ENCODE measurements at regions of chr4 and their contacts with region 1.

Region 1: DNA sequence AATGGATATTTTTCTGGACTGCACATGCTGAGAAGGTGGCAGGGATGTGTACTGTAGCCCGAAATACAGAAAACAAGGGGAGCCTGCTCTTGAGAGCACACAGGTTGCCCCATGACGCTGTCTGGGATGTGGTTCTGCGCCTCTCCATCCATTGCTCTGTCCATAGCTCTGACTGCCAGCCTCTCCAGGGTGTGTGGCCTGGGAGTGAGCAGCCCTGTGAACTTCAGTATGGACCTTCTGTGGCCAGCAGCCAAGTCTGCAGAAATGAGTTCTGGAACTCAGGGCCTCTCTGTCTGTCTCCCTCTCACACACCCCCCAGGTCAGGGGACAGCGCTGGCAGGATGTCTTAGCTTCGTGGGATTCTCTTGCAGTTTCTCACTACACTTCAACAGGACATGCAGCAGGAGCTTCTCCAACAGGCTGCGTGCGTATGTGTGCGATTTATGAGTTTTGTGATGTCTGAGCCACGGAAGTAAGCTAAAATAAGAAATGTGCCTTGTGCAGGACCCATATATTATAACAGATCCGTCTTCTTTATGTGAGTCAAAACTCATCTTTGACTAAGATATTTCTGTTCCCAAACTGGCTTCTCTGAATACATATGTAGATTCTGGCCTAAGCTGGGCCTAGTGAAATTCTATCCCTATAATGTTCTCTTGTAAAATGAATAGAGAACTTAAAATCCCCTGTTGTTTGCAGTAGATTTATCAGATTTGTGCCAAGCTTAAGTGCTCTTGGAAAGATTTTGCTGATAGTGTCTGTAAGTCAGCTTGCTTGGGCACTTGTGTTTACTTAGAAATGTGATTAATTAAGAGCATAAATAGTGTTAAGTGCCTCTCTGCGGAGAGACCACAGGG is 40.0 kb downstream of the PROM1 start:
- DNase-seq: no peak

Region 2: GRCh38 chr4:16006791-16007446 is 37.0 kb before region 1 on chr4:
- intact Hi-C with region 1: no loop called
- DNase-seq: no peak

Region 3: DNA sequence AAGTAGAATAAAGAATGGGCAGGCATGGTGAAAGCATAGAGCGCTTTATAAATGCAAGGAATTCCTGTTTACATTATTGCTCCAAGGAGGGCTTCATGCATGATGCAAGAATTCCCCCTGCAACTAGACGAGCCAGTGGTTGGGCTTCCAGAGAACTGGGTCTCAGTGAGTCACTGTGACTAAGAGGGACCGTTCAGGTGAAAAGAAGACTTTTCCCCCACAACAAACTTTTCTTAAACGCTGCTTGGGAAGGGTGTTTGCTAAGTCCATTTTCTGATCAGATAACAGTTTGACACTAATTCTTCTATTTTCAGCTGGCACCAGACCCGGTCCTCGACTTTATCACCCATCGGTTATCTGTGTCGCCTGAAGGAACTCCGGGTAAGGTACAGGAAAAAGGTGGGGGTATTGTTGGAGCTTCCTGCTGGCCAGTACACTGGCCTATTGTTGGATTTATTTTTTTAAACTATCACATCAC is 814.4 kb after region 1 on chr4:
- intact Hi-C with region 1: loop called in 1 of 2 experiments (anchors 5 kb)
- DNase-seq: no peak